ENCODE measurements at regions of chr2 and their contacts with region 1.

Region 1: GRCh38 chr2:113700186-113700841 is 56.1 kb downstream of the SLC35F5 start:
- DNase-seq: peak; percentile 51
- ATAC-seq: peak; percentile 93
- H3K4me3 ChIP-seq: peak overlapping the region; percentile 60
- H3K27ac ChIP-seq: peak overlapping the region; percentile 71; the same call in 1 of the 2 replicates
- H3K4me1 ChIP-seq: peaks cover 17% of the 10 kb centered on the region
- H3K27me3 ChIP-seq: no peaks in the 10 kb centered on the region
- CTCF ChIP-seq: peak; percentile 50 to 79 (median 62); a peak in 5 of 6 replicates
- EP300 ChIP-seq: no peak
- POLR2A ChIP-seq: no peak
- RAD21 ChIP-seq: peak; percentile 90

Region 2: GRCh38 chr2:113602869-113603466 is 97.3 kb before region 1 on chr2:
- CTCF ChIA-PET with region 1: interaction called, 59 read pairs
- POLR2A ChIA-PET with region 1: interaction called, 10 read pairs
- RAD21 ChIA-PET with region 1: interaction called, 32 read pairs
- SMC1A ChIA-PET with region 1: interaction called, 17 read pairs
- in situ Hi-C with region 1: no loop called
- intact Hi-C with region 1: no loop called
- DNase-seq: no peak
- ATAC-seq: peak; percentile 86
- H3K4me3 ChIP-seq: peak overlapping the region; percentile 70; the same call in 1 of the 2 replicates
- H3K27ac ChIP-seq: peak overlapping the region; percentile 44; the same call in 1 of the 2 replicates
- H3K4me1 ChIP-seq: no peaks in the 10 kb centered on the region
- H3K27me3 ChIP-seq: no peaks in the 10 kb centered on the region
- CTCF ChIP-seq: no peak
- EP300 ChIP-seq: no peak
- POLR2A ChIP-seq: no peak
- RAD21 ChIP-seq: no peak

Region 3: DNA sequence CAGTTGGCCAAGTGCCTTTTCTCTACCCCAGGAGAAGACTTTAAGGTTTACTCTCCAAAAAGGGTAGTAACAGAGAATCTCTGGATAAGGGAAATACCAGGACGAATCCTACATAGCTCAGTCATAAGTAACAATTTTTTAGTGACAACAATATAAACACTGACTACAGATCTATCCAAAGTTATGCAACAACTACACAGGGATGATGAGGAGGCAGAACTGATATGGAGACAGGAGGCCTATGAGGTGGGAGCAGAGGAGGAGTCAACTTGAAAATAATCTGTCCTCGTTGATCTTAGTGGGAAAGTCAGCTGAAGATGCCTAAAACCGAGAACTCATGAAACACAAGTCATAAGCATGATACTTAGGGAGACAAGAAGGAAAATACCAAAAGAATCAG is 16.0 kb after region 1 on chr2:
- CTCF ChIA-PET with region 1: interaction called, 30 read pairs
- POLR2A ChIA-PET with region 1: no interaction called
- RAD21 ChIA-PET with region 1: interaction called, 8 read pairs
- SMC1A ChIA-PET with region 1: interaction called, 6 read pairs
- in situ Hi-C with region 1: no loop called
- intact Hi-C with region 1: no loop called
- DNase-seq: no peak
- ATAC-seq: no peak
- H3K4me3 ChIP-seq: no peak overlapping the region
- H3K27ac ChIP-seq: no peak overlapping the region
- H3K4me1 ChIP-seq: no peaks in the 10 kb centered on the region
- H3K27me3 ChIP-seq: no peaks in the 10 kb centered on the region
- CTCF ChIP-seq: no peak
- EP300 ChIP-seq: no peak
- POLR2A ChIP-seq: no peak
- RAD21 ChIP-seq: no peak

Region 4: GRCh38 chr2:113724010-113724409 is 23.7 kb after region 1 on chr2:
- CTCF ChIA-PET with region 1: interaction called, 23 read pairs
- POLR2A ChIA-PET with region 1: no interaction called
- RAD21 ChIA-PET with region 1: interaction called, 8 read pairs
- SMC1A ChIA-PET with region 1: interaction called, 15 read pairs
- in situ Hi-C with region 1: no loop called
- intact Hi-C with region 1: no loop called
- DNase-seq: no peak
- ATAC-seq: no peak
- H3K4me3 ChIP-seq: no peak overlapping the region
- H3K27ac ChIP-seq: no peak overlapping the region
- H3K4me1 ChIP-seq: no peaks in the 10 kb centered on the region
- H3K27me3 ChIP-seq: no peaks in the 10 kb centered on the region
- CTCF ChIP-seq: no peak
- EP300 ChIP-seq: no peak
- POLR2A ChIP-seq: no peak
- RAD21 ChIP-seq: no peak

Region 5: GRCh38 chr2:113977660-113978523 is 277.6 kb after region 1 on chr2:
- CTCF ChIA-PET with region 1: interaction called, 14 read pairs
- POLR2A ChIA-PET with region 1: no interaction called
- RAD21 ChIA-PET with region 1: interaction called, 8 read pairs
- SMC1A ChIA-PET with region 1: interaction called, 4 read pairs
- in situ Hi-C with region 1: no loop called
- intact Hi-C with region 1: no loop called
- DNase-seq: no peak
- ATAC-seq: peak; percentile 18
- H3K4me3 ChIP-seq: no peak overlapping the region
- H3K27ac ChIP-seq: no peak overlapping the region
- H3K4me1 ChIP-seq: no peaks in the 10 kb centered on the region
- H3K27me3 ChIP-seq: no peaks in the 10 kb centered on the region
- CTCF ChIP-seq: peak in 1 of 3 experiments; percentile 12; a peak in 1 of 6 replicates
- EP300 ChIP-seq: no peak
- POLR2A ChIP-seq: no peak; the same call in 1 of the 2 replicates
- RAD21 ChIP-seq: no peak

Measured in GM12878 (cell line).